ENCODE measurements at regions of chr9 and their contacts with region 1.

Region 1: DNA sequence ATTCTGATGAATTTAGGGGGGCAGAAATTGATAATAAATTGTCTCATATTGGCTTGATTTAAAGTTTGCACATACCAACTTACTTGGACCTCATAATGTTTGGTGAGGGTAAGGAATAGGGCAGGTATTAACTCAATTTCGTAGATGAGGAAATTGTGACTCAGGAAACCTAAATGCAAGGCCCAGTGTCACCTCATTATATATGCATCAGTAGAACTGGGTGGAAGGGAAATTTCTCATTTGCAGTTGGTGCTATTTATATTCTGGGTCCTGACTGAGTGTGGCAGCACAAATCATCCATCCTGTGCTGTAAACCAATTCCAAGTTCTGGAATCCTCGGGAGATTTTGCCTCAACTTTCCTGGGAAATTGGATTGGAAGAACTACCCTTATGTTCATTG is 103.0 kb downstream of the SPATA31D1 start:
- DNase-seq: peak; percentile 65
- ATAC-seq: peak; percentile 78
- H3K4me3 ChIP-seq: peak overlapping the region in 1 of 5 experiments; percentile 35
- H3K4me3 Mint-ChIP-seq: peak overlapping the region; percentile 70
- H3K27ac ChIP-seq: peak overlapping the region; percentile 60 to 77
- H3K27ac Mint-ChIP-seq: peak overlapping the region; percentile 85
- H3K4me1 ChIP-seq: peaks cover 41% of the 10 kb centered on the region in 2 donors
- H3K4me1 Mint-ChIP-seq: peaks cover 56% of the 10 kb centered on the region
- H3K27me3 ChIP-seq: no peaks in the 10 kb centered on the region
- H3K27me3 Mint-ChIP-seq: no peaks in the 10 kb centered on the region
- CTCF ChIP-seq: no peak

Region 2: GRCh38 chr9:82109626-82110025 is 18.0 kb after region 1 on chr9:
- CTCF ChIA-PET with region 1: no interaction called
- POLR2A ChIA-PET with region 1: no interaction called
- intact Hi-C with region 1: loop called (anchors 2 kb)
- DNase-seq: no peak
- ATAC-seq: no peak
- H3K4me3 ChIP-seq: no peak overlapping the region
- H3K4me3 Mint-ChIP-seq: no peak overlapping the region
- H3K27ac ChIP-seq: no peak overlapping the region
- H3K27ac Mint-ChIP-seq: no peak overlapping the region
- H3K4me1 ChIP-seq: peaks cover 0 to 3% of the 10 kb centered on the region in 2 donors
- H3K4me1 Mint-ChIP-seq: peaks cover 5% of the 10 kb centered on the region
- H3K27me3 ChIP-seq: no peaks in the 10 kb centered on the region
- H3K27me3 Mint-ChIP-seq: no peaks in the 10 kb centered on the region
- CTCF ChIP-seq: no peak

Region 3: GRCh38 chr9:82202808-82203207 is 111.2 kb after region 1 on chr9:
- CTCF ChIA-PET with region 1: no interaction called
- POLR2A ChIA-PET with region 1: no interaction called
- intact Hi-C with region 1: no loop called
- DNase-seq: no peak
- ATAC-seq: no peak
- H3K4me3 ChIP-seq: no peak overlapping the region
- H3K4me3 Mint-ChIP-seq: no peak overlapping the region
- H3K27ac ChIP-seq: no peak overlapping the region
- H3K27ac Mint-ChIP-seq: no peak overlapping the region
- H3K4me1 ChIP-seq: no peaks in the 10 kb centered on the region
- H3K4me1 Mint-ChIP-seq: peaks cover 17% of the 10 kb centered on the region
- H3K27me3 ChIP-seq: no peaks in the 10 kb centered on the region
- H3K27me3 Mint-ChIP-seq: no peaks in the 10 kb centered on the region
- CTCF ChIP-seq: no peak

Region 4: DNA sequence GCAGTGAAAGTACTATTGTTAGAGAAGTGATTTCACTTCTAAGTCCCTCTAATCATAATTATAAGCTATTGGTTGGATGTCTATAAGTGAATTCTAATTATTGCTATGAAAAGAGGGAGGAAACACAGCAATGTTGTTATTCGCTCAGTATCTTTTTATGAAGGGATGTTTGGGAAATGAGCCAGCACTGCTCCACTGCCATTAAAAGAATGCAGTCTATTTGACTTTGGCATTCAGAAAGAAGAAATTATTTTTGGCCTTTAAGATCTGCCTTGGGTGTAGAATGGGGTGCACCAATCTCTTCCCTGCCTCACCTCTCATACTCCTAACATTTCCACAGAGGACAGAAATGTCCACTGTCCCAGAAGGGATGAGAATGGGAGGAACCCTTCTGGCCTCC is 229.0 kb after region 1 on chr9:
- CTCF ChIA-PET with region 1: no interaction called
- POLR2A ChIA-PET with region 1: no interaction called
- intact Hi-C with region 1: no loop called
- DNase-seq: no peak
- ATAC-seq: no peak
- H3K4me3 ChIP-seq: no peak overlapping the region
- H3K4me3 Mint-ChIP-seq: no peak overlapping the region
- H3K27ac ChIP-seq: no peak overlapping the region
- H3K27ac Mint-ChIP-seq: no peak overlapping the region
- H3K4me1 ChIP-seq: no peaks in the 10 kb centered on the region
- H3K4me1 Mint-ChIP-seq: no peaks in the 10 kb centered on the region
- H3K27me3 ChIP-seq: no peaks in the 10 kb centered on the region
- H3K27me3 Mint-ChIP-seq: no peaks in the 10 kb centered on the region
- CTCF ChIP-seq: no peak